Activated T-helper 1 cell treated with anti-CD3 and anti-CD28 coated beads, Interleukin-12 subunit alpha, Interleukin-12 subunit beta, Interleukin-2, Interleukin-4 antibody, amounts not matched to agents 30 ng/mL and 10 ng/mL and 1 ng/mL, durations not matched to agents 14 hours and 24 hours and 36 hours (primary cell): ENCODE measurements at regions of chr17 and their contacts with region 1.

Region 1: DNA sequence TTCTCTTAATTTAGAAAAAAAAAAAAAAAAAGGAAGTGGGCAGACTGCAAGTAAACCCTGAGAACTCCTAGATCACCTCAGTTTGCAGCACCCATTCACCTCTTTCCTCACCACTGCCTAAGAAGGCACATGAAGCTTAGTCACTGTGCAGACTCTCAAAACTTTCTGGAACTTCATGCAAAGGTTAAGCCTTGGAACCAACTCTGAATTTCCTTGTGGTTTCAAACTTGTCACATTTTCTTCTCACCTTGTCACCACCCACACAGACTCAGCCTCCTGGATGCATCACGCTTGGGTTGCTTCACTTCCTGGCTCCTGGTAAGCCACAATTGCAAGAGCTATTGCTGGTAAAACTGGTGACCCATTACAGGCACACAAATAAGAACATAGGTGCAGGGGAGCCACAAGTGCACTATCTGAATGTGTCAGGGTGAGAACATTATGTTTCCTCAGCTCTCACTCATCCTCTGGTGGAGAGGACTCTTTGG is 15.0 kb upstream of the CPD start:
- DNase-seq: peak; percentile 84
- H3K4me3 Mint-ChIP-seq: peak overlapping the region; percentile 44
- H3K27ac Mint-ChIP-seq: peak overlapping the region; percentile 90
- H3K4me1 Mint-ChIP-seq: peaks cover 36% of the 10 kb centered on the region
- H3K27me3 Mint-ChIP-seq: no peaks in the 10 kb centered on the region

Region 2: GRCh38 chr17:29709861-29710519 is 653.8 kb before region 1 on chr17:
- intact Hi-C with region 1: loop called (anchors 10 kb)
- DNase-seq: no peak
- H3K4me3 Mint-ChIP-seq: no peak overlapping the region
- H3K27ac Mint-ChIP-seq: no peak overlapping the region
- H3K4me1 Mint-ChIP-seq: peaks cover 48% of the 10 kb centered on the region
- H3K27me3 Mint-ChIP-seq: no peaks in the 10 kb centered on the region

Region 3: GRCh38 chr17:30291543-30292285 is 72.0 kb before region 1 on chr17 and contains the start of gene BLMH:
- intact Hi-C with region 1: loop called (anchors 1 kb)
- DNase-seq: peak; percentile 80
- H3K4me3 Mint-ChIP-seq: peak within 1 kb of the TSS; percentile 97
- H3K27ac Mint-ChIP-seq: peak within 1 kb of the TSS; percentile 90
- H3K4me1 Mint-ChIP-seq: peaks cover 13% of the 10 kb centered on the region
- H3K27me3 Mint-ChIP-seq: no peaks in the 10 kb centered on the region
- total RNA-seq, gene BLMH: 64.8 and 64.9 TPM in 2 replicates

Region 4: GRCh38 chr17:30378824-30379302 is 15.1 kb after region 1 on chr17 and contains the start of gene CPD:
- intact Hi-C with region 1: loop called (anchors 1 kb)
- DNase-seq: peak; percentile 97
- H3K4me3 Mint-ChIP-seq: peak within 1 kb of the TSS; percentile 92
- H3K27ac Mint-ChIP-seq: peak within 1 kb of the TSS; percentile 97
- H3K4me1 Mint-ChIP-seq: peaks cover 67% of the 10 kb centered on the region
- H3K27me3 Mint-ChIP-seq: no peaks in the 10 kb centered on the region
- total RNA-seq, gene CPD: 29.7 and 35.3 TPM in 2 replicates

Region 5: DNA sequence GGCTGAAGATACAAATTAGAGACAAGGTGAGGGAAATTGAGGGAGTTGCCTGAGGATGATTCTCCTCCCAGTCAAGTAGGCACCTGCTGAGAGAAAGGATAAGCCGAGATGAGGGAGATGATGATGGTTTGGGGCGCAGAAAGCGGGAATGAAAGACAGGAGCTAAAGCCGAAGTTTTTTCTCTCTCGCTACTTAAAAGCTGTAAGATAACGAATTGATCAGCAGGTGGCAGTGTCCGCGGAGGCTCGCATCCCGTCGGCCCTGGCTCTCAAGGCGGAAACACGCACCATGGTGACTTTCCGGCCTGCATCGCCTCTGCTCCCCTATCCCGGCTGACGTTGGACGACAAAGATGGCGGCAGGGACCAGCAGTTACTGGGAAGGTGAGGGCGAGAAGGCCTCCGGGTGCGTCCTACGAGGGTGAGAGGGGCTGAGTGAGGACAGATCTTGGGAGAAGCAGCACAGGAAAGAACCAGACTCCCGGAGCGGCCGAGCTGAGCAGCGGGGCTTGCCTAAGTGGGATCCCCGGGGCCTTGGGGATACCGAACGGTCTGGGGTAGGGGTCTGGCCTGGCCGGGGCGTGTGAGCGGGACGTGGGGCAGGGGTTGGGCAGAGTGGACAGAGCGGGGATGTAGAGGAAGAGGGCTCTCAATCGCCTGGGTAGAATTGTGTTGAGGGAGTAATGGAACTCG is 113.5 kb after region 1 on chr17 and contains the start of gene GOSR1:
- intact Hi-C with region 1: loop called (anchors 1 kb)
- DNase-seq: peak; percentile 87
- H3K4me3 Mint-ChIP-seq: peak within 1 kb of the TSS; percentile 98
- H3K27ac Mint-ChIP-seq: peak within 1 kb of the TSS; percentile 98
- H3K4me1 Mint-ChIP-seq: peaks cover 34% of the 10 kb centered on the region
- H3K27me3 Mint-ChIP-seq: no peaks in the 10 kb centered on the region
- total RNA-seq, gene GOSR1: 61.5 and 66.6 TPM in 2 replicates